ENCODE measurements at regions of chr12 and their contacts with region 1.

Region 1: GRCh38 chr12:124992874-124993625 is 395 bp upstream of the BRI3BP start:
- DNase-seq: peak; percentile 75 to 81
- H3K4me3 ChIP-seq: peak overlapping the region; percentile 65
- H3K27ac ChIP-seq: 0 out of 2 replicates have a peak overlapping the region, but pooled peaks have one; percentile 14
- H3K4me1 ChIP-seq: peaks cover 18% of the 10 kb centered on the region; the same call in 1 of the 2 replicates
- H3K27me3 ChIP-seq: no peaks in the 10 kb centered on the region
- CTCF ChIP-seq: peak; percentile 73; the same call in 1 of the 2 replicates

Region 2: DNA sequence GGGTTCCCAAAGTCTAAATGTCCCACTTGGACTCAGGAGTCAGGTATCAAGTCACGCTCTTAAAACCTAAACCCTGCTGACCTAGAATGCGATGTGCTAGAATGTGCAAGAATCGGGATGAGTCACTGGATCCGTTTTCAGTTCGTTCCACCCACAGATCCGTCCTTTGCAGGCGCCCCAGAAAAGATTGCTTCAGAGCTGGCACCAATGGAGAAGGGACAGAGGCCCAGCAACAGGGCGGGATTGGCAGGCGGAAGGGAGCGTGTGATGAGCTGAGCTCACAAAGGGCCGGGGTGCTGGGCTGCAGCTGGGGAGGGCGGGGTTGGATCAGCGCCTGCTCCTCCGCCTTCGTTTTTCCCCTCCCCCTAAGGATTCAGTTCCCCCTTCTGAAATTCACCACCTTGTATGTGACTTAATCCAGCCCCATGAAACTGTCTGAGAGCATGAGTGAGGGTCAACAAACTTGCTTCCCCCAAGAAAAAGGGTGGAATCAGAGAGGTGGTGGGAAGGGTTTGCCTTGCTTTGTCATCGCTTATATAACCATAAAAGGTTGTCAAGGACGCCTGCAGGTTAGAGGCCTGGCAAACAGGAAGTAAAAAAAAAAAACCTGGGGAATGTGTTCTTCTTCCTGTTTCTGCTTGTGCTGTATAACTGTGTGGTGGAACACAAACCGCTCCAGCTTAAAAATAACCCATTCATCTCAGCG is 75.8 kb before region 1 on chr12:
- CTCF ChIA-PET with region 1: no interaction called
- POLR2A ChIA-PET with region 1: no interaction called
- intact Hi-C with region 1: loop called (anchors 5 kb)
- DNase-seq: peak; percentile 95 to 99
- H3K4me3 ChIP-seq: peak overlapping the region; percentile 100
- H3K27ac ChIP-seq: peak overlapping the region; percentile 100
- H3K4me1 ChIP-seq: peaks cover 54% of the 10 kb centered on the region
- H3K27me3 ChIP-seq: no peaks in the 10 kb centered on the region
- CTCF ChIP-seq: 0 out of 2 replicates have a peak, but pooled peaks have one; percentile 5

Region 3: GRCh38 chr12:124979568-124979967 is 13.5 kb before region 1 on chr12:
- CTCF ChIA-PET with region 1: no interaction called
- POLR2A ChIA-PET with region 1: no interaction called
- intact Hi-C with region 1: no loop called
- DNase-seq: no peak
- H3K4me3 ChIP-seq: no peak overlapping the region
- H3K27ac ChIP-seq: no peak overlapping the region
- H3K4me1 ChIP-seq: no peaks in the 10 kb centered on the region
- H3K27me3 ChIP-seq: no peaks in the 10 kb centered on the region
- CTCF ChIP-seq: no peak

Region 4: DNA sequence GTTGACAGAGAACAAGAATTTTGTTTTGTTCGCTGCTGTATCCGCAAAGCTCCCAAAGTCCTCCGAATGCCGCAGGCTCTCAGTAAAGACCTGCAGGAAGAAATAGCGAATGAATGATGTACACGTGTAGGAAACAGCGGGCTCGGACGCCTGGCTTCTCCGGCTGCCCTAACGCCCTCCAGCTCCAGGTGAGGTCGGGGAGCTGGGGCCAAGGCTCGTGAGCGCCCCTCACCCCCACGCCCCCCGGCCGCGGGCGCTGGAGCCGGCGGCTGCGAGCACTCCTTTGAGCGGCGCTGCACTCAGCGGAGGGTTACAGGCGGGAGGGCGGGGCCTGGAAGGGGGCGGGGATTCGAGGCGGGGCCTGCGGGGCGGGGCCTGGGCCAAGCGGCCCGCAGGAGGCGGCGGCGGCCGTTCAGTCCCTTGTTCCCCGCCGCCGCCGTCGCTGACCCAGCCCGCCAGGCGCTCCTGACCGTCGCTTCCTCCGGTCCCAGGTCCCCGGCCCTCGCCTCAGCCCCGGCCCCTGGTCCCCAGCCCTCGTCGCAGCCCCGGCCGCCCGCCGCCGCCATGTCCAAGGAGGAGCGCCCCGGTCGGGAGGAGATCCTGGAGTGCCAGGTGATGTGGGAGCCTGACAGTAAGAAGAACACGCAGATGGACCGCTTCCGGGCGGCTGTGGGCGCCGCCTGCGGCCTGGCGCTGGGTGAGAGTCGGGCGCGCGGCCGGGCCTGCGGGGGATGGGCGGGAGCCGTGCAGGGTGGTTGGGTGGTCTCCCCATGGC is 72.2 kb after region 1 on chr12 and contains the start of gene AACS:
- CTCF ChIA-PET with region 1: no interaction called
- POLR2A ChIA-PET with region 1: interaction called, 4 read pairs
- intact Hi-C with region 1: loop called (anchors 10 kb)
- DNase-seq: peak; percentile 37 to 66
- H3K4me3 ChIP-seq: peak within 1 kb of the TSS; percentile 90
- H3K27ac ChIP-seq: no peak within 1 kb of the TSS
- H3K4me1 ChIP-seq: peaks cover 16% of the 10 kb centered on the region; the same call in 1 of the 2 replicates
- H3K27me3 ChIP-seq: no peaks in the 10 kb centered on the region
- CTCF ChIP-seq: no peak
- total RNA-seq, gene AACS: 46.8 and 48.5 TPM in 2 replicates

Region 5: DNA sequence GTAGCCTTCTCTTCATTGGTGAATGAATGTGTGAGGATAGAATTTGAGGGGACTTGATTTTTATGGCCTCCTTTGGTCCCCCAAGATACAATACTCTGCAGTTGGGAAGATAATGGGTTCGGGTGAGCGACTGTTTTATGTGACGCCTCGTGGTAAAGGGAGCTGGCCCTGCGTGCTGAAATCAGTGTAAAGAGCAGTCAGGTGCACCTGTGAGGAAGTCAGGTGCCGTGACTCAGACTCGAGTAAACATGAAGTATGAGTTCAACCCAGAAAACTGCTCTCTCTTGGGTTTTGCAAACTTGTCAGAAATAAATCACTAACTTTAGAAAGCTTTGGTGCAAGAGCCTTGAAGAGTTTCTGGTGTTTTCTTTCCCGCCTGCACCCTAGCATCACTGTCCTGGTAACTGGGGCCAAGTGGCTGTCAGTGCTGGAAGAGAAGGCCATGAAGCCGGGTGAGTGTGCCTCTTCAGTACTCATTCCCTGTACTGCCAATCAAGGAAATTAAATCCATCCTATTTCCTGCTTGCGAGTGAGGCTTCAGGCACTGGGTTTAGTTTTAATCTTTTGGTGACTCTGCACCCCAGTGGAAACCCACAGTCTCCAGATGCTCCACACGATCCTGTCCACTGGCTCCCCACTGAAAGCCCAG is 131.4 kb after region 1 on chr12:
- CTCF ChIA-PET with region 1: no interaction called
- POLR2A ChIA-PET with region 1: no interaction called
- intact Hi-C with region 1: loop called (anchors 10 kb)
- DNase-seq: peak; percentile 29 to 81
- H3K4me3 ChIP-seq: no peak overlapping the region
- H3K27ac ChIP-seq: peak overlapping the region; percentile 84
- H3K4me1 ChIP-seq: peaks cover 31% of the 10 kb centered on the region
- H3K27me3 ChIP-seq: no peaks in the 10 kb centered on the region
- CTCF ChIP-seq: no peak

Measured in PC-9 (cell line).